Ascending aorta (tissue), 2 donors: ENCODE measurements at regions of chr3 and their contacts with region 1.

Region 1: GRCh38 chr3:66038726-66039589 is at the start of gene MAGI1:
- DNase-seq: peak; percentile 56 to 94
- H3K4me3 ChIP-seq: peak within 1 kb of the TSS; percentile 77 to 80
- H3K27ac ChIP-seq: peak within 1 kb of the TSS; percentile 93 to 96
- H3K4me1 ChIP-seq: peaks cover 0 to 15% of the 10 kb centered on the region in 2 donors
- H3K27me3 ChIP-seq: no peaks in the 10 kb centered on the region
- CTCF ChIP-seq: no peak
- total RNA-seq, gene MAGI1: 28.4 TPM

Region 2: GRCh38 chr3:65785065-65785645 is 253.8 kb before region 1 on chr3:
- intact Hi-C with region 1: loop called (anchors 2 kb)
- DNase-seq: no peak
- H3K4me3 ChIP-seq: no peak overlapping the region
- H3K27ac ChIP-seq: peak overlapping the region; percentile 62 to 66
- H3K4me1 ChIP-seq: peaks cover 0 to 7% of the 10 kb centered on the region in 2 donors
- H3K27me3 ChIP-seq: no peaks in the 10 kb centered on the region
- CTCF ChIP-seq: peak; percentile 32 to 73 (median 58)

Region 3: GRCh38 chr3:65871305-65872141 is 167.4 kb before region 1 on chr3:
- intact Hi-C with region 1: no loop called
- DNase-seq: no peak
- H3K4me3 ChIP-seq: no peak overlapping the region
- H3K27ac ChIP-seq: no peak overlapping the region
- H3K4me1 ChIP-seq: peaks cover 0 to 10% of the 10 kb centered on the region in 2 donors
- H3K27me3 ChIP-seq: no peaks in the 10 kb centered on the region
- CTCF ChIP-seq: no peak

Region 4: GRCh38 chr3:65894679-65895453 is 144.1 kb before region 1 on chr3:
- intact Hi-C with region 1: loop called (anchors 2 kb)
- DNase-seq: peak in 1 of 2 donors; percentile 76
- H3K4me3 ChIP-seq: no peak overlapping the region
- H3K27ac ChIP-seq: peak overlapping the region; percentile 76 to 84
- H3K4me1 ChIP-seq: peaks cover 3 to 30% of the 10 kb centered on the region in 2 donors
- H3K27me3 ChIP-seq: no peaks in the 10 kb centered on the region
- CTCF ChIP-seq: no peak

Region 5: DNA sequence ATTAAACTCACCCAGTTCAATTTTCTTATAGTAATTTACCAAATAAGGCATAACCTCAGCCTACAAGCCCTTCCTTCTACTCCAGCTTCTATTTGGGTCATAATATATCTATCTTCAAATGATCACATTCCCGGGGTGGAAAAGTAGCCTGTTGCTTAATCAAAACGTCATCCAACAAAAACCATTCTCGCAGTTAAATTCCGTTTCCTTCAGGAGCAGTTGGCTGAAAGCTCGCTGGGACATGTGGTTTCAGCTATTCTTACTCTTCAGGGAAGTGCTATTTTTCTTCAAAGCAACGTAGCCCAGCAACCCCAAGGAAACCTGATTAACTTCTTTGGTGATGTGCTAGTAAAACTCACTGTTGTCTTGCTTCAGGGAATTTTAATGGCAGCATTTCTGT is 59.8 kb before region 1 on chr3:
- intact Hi-C with region 1: loop called (anchors 1 kb)
- DNase-seq: peak in 1 of 2 donors; percentile 84
- H3K4me3 ChIP-seq: peak overlapping the region in 1 of 2 donors; percentile 19
- H3K27ac ChIP-seq: peak overlapping the region; percentile 68 to 70
- H3K4me1 ChIP-seq: peaks cover 6 to 26% of the 10 kb centered on the region in 2 donors
- H3K27me3 ChIP-seq: no peaks in the 10 kb centered on the region
- CTCF ChIP-seq: no peak

Region 6: DNA sequence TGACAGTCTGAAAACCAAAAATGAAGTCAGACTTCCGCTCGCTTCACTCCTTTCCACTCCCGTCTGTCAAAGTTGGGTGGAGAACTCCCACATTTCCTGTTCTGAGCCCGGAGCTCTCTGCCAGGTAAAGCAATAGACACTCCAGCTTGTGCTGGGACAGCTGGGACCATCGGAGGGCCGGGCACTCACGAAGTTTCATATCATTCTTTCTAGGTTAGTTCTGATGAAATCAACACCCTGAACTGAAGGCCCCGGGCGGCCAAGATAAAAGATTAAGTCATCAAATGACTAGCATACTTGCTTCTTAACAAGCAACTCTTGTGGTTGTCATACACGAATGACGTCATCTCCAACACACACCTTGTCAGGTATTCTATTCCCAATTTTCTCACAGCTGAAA is 42.4 kb before region 1 on chr3:
- intact Hi-C with region 1: no loop called
- DNase-seq: no peak
- H3K4me3 ChIP-seq: no peak overlapping the region
- H3K27ac ChIP-seq: peak overlapping the region in 1 of 2 donors; percentile 12
- H3K4me1 ChIP-seq: peaks cover 0 to 9% of the 10 kb centered on the region in 2 donors
- H3K27me3 ChIP-seq: no peaks in the 10 kb centered on the region
- CTCF ChIP-seq: no peak

Region 7: GRCh38 chr3:66115858-66116654 is 77.1 kb after region 1 on chr3:
- intact Hi-C with region 1: loop called (anchors 5 kb)
- DNase-seq: peak; percentile 21 to 82
- H3K4me3 ChIP-seq: no peak overlapping the region
- H3K27ac ChIP-seq: peak overlapping the region in 1 of 2 donors; percentile 17
- H3K4me1 ChIP-seq: peaks cover 0 to 4% of the 10 kb centered on the region in 2 donors
- H3K27me3 ChIP-seq: no peaks in the 10 kb centered on the region
- CTCF ChIP-seq: no peak

Region 8: DNA sequence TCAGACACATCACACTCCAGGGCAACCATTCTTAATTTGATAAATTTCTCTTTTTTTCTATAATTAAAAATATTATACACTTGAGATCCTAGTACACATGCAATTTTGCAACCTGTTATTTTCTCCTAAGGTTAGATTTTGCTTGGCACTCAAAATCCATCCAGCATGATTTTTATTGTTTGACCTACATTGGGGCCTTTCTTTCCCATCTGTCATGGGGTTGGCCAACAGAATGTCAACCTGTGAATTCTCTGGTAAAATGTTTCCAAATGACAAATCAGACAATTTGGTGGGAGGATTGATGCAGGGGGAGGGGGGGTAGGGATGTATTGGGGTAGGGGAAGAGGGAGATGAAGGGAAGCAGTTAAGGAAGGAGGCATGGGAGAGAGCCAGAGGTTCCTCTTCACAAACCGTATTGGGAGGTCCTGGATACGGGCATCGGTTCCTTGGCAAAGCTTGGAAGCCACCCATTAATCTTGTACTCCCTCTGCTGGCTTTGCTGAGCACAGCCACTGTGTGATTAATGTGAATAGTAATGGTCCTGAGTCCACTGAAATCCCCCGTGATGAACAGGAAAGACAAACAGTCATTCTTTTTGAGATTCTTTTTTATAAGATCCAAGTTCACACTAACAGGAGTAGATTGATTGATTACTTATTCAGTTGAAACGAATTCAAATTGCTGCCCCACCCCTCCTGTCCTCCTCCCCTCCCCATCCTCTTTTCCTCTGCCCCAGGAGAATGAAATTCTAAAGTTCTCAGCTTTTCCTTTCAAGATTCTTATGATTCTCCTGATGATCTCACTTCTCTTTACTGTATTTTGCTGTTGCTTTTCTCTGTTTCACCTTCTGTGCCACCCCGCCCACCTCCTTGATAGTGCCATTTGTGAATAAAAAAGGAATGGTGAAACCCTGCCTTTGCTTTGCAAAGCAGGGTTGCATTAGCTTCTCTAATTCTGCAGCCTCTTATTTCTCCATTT is 99.7 kb after region 1 on chr3:
- intact Hi-C with region 1: loop called (anchors 2 kb)
- DNase-seq: peak in 1 of 2 donors; percentile 78
- H3K4me3 ChIP-seq: no peak overlapping the region
- H3K27ac ChIP-seq: no peak overlapping the region
- H3K4me1 ChIP-seq: no peaks in the 10 kb centered on the region
- H3K27me3 ChIP-seq: no peaks in the 10 kb centered on the region
- CTCF ChIP-seq: peak; percentile 70 to 87 (median 72)

Region 9: GRCh38 chr3:66153481-66154443 is 114.8 kb after region 1 on chr3:
- intact Hi-C with region 1: no loop called
- DNase-seq: no peak
- H3K4me3 ChIP-seq: peak overlapping the region; percentile 50 to 58
- H3K27ac ChIP-seq: peak overlapping the region; percentile 31 to 33
- H3K4me1 ChIP-seq: peaks cover 0 to 16% of the 10 kb centered on the region in 2 donors
- H3K27me3 ChIP-seq: no peaks in the 10 kb centered on the region
- CTCF ChIP-seq: no peak

Region 10: GRCh38 chr3:66220602-66221377 is 181.8 kb after region 1 on chr3 and contains the start of gene SLC25A26:
- intact Hi-C with region 1: loop called (anchors 2 kb)
- DNase-seq: peak; percentile 93 to 98
- H3K4me3 ChIP-seq: peak within 1 kb of the TSS; percentile 76
- H3K27ac ChIP-seq: peak within 1 kb of the TSS; percentile 71 to 73
- H3K4me1 ChIP-seq: peaks cover 0 to 4% of the 10 kb centered on the region in 2 donors
- H3K27me3 ChIP-seq: no peaks in the 10 kb centered on the region
- CTCF ChIP-seq: no peak
- total RNA-seq, gene SLC25A26: 11.7 TPM

Region 11: GRCh38 chr3:66326340-66326739 is 287.4 kb after region 1 on chr3:
- intact Hi-C with region 1: no loop called
- DNase-seq: no peak
- H3K4me3 ChIP-seq: no peak overlapping the region
- H3K27ac ChIP-seq: no peak overlapping the region
- H3K4me1 ChIP-seq: no peaks in the 10 kb centered on the region
- H3K27me3 ChIP-seq: no peaks in the 10 kb centered on the region
- CTCF ChIP-seq: no peak